Dendritic cell treated with granulocyte-macrophage colony-stimulating factor and Interleukin-4, amounts not matched to agents 40 ng/mL and 50 ng/mL, for 4 days (primary cell): ENCODE measurements at regions of chr1 and their contacts with region 1.

Region 1: GRCh38 chr1:72745413-72745812 is 463.1 kb upstream of the NEGR1 start:
- H3K4me3 Mint-ChIP-seq: no peak overlapping the region
- H3K27ac Mint-ChIP-seq: no peak overlapping the region
- H3K4me1 Mint-ChIP-seq: no peaks in the 10 kb centered on the region
- H3K27me3 Mint-ChIP-seq: no peaks in the 10 kb centered on the region

Region 2: GRCh38 chr1:71967670-71968069 is 777.7 kb before region 1 on chr1:
- intact Hi-C with region 1: no loop called
- H3K4me3 Mint-ChIP-seq: no peak overlapping the region
- H3K27ac Mint-ChIP-seq: no peak overlapping the region
- H3K4me1 Mint-ChIP-seq: no peaks in the 10 kb centered on the region
- H3K27me3 Mint-ChIP-seq: no peaks in the 10 kb centered on the region

Region 3: GRCh38 chr1:72570815-72571214 is 174.6 kb before region 1 on chr1:
- intact Hi-C with region 1: no loop called
- H3K4me3 Mint-ChIP-seq: no peak overlapping the region
- H3K27ac Mint-ChIP-seq: no peak overlapping the region
- H3K4me1 Mint-ChIP-seq: no peaks in the 10 kb centered on the region
- H3K27me3 Mint-ChIP-seq: no peaks in the 10 kb centered on the region

Region 4: DNA sequence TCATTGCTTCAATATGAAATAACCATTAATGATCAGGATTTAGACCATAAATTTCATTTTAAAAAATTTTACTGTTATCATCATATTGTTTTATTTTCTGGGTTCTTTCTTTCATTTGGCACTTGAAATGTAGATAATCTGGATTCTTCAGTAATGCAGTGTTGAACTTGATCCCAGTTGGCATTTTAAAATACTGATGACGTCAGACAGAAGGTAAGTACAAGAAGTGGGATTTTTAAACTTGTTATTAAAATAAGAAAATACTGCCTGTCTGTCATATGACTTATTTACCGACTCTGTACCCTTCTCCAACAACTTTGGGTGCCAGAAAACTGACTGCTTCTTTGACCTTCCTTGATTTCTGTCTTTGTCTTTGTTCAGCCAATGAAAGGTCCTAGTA is 48.0 kb before region 1 on chr1:
- intact Hi-C with region 1: loop called (anchors 5 kb)
- H3K4me3 Mint-ChIP-seq: no peak overlapping the region
- H3K27ac Mint-ChIP-seq: no peak overlapping the region
- H3K4me1 Mint-ChIP-seq: no peaks in the 10 kb centered on the region
- H3K27me3 Mint-ChIP-seq: no peaks in the 10 kb centered on the region

Region 5: DNA sequence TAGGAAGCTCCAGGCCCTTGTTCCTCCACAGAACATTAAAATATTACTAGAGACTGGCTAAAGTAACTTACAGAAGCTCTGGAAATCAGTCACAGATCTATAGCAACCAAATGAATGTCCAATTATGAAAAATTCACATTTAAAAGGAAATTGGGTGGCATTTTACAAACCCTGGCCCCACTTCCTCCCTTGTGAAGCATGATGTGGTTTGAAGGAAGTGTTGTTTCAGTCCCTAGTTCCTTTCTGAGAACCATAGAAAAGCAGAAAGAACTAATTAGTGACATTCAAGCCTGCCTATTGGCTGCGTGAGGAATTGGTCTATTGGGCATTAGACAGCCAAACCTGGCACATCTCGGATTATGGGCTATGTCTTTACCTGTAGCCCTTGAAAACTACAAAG is 186.6 kb after region 1 on chr1:
- intact Hi-C with region 1: no loop called
- H3K4me3 Mint-ChIP-seq: no peak overlapping the region
- H3K27ac Mint-ChIP-seq: no peak overlapping the region
- H3K4me1 Mint-ChIP-seq: no peaks in the 10 kb centered on the region
- H3K27me3 Mint-ChIP-seq: no peaks in the 10 kb centered on the region